Natural killer cell (primary cell): ENCODE measurements at regions of chr17 and their contacts with region 1.

Region 1: GRCh38 chr17:43576563-43577229 is 30.6 kb upstream of the ETV4 start:
- DNase-seq: peak; percentile 56 to 89
- ATAC-seq: peak; percentile 61 to 89 (median 77)
- H3K4me3 ChIP-seq: no peak overlapping the region
- H3K4me3 Mint-ChIP-seq: no peak overlapping the region
- H3K27ac ChIP-seq: no peak overlapping the region
- H3K27ac Mint-ChIP-seq: no peak overlapping the region
- H3K4me1 ChIP-seq: peaks cover 19% of the 10 kb centered on the region
- H3K4me1 Mint-ChIP-seq: no peaks in the 10 kb centered on the region
- H3K27me3 ChIP-seq: no peaks in the 10 kb centered on the region
- H3K27me3 Mint-ChIP-seq: peaks cover 9 to 13% of the 10 kb centered on the region in 2 donors
- CTCF ChIP-seq: peak; percentile 86

Region 2: DNA sequence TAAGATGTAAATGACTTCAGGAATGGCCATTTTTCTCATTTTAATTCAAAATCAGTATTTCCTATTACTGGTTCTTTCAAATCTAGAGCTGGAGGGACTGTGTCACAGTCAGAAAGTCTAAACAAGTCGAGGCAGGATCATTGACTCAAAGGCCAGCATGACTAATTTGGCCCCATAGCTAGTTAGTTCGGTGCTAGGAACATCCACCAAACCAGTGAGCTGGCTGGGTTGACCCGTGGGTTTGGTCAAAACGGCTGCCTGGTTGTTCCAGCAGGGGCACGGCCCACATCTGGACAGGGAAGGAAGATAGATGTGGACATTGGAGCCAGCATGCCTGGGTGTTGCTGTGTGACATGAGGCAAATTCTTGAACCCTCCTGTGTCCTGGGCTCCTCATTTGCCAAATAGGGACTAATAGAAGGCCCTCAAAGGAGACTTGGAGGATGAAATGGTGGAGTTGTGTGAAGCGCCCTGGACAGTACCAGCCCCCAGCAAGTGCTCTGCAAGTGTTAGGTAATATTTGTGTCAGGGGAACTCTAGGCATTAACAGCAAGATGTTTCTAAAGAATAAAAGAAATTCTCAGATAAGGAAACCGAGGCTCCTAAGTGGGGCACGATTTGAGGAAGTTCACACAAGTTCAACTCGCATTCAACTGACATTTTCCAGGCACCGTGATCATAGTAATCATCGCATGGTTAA is 38.8 kb after region 1 on chr17:
- intact Hi-C with region 1: no loop called
- DNase-seq: no peak
- ATAC-seq: no peak
- H3K4me3 ChIP-seq: no peak overlapping the region
- H3K4me3 Mint-ChIP-seq: no peak overlapping the region
- H3K27ac ChIP-seq: no peak overlapping the region
- H3K27ac Mint-ChIP-seq: no peak overlapping the region
- H3K4me1 ChIP-seq: no peaks in the 10 kb centered on the region
- H3K4me1 Mint-ChIP-seq: no peaks in the 10 kb centered on the region
- H3K27me3 ChIP-seq: no peaks in the 10 kb centered on the region
- H3K27me3 Mint-ChIP-seq: peaks cover 8 to 12% of the 10 kb centered on the region in 2 donors
- CTCF ChIP-seq: no peak

Region 3: DNA sequence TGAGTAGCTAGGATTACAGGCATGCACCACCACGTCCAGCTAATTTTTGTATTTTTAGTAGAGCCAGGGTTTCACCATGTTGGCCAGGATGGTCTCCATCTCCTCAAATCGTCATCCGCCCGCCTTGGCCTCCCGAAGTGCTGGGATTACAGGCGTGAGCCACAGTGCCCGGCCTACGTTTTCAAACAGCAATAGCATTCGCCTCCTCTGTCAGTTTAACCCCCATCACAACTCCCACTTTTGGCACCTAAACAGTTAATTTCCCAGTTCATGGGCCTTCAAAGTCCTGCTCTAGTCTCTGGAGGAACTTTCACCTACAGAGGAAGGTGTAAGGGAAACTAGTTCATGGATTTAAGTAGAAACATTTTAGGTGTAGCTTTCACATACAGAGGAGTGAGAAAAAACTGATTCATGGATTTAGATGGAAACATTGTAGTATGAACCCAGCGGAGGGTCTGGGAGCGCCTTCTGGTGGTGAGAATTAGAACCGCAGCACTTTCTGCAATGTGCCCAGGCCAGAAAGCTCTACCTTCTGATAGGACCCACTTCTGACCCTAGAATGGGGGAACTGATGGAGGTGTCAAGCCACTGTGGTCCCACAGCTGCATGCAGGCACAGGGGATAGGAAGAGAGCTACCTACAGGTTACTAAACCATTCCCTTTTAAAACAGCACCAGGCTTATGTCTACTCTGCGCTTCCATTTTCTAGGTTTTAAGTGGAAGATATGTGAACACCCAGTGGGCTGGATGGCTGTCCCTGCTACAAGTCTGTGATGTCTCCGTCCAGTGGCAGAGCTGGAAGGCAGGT is 97.0 kb after region 1 on chr17:
- intact Hi-C with region 1: loop called (anchors 1 kb)
- DNase-seq: peak; percentile 61 to 83
- ATAC-seq: peak; percentile 64 to 77 (median 67)
- H3K4me3 ChIP-seq: no peak overlapping the region
- H3K4me3 Mint-ChIP-seq: no peak overlapping the region
- H3K27ac ChIP-seq: no peak overlapping the region
- H3K27ac Mint-ChIP-seq: no peak overlapping the region
- H3K4me1 ChIP-seq: peaks cover 7% of the 10 kb centered on the region
- H3K4me1 Mint-ChIP-seq: peaks cover 6 to 11% of the 10 kb centered on the region in 2 donors
- H3K27me3 ChIP-seq: no peaks in the 10 kb centered on the region
- H3K27me3 Mint-ChIP-seq: peaks cover 5 to 15% of the 10 kb centered on the region in 2 donors
- CTCF ChIP-seq: peak; percentile 83

Region 4: DNA sequence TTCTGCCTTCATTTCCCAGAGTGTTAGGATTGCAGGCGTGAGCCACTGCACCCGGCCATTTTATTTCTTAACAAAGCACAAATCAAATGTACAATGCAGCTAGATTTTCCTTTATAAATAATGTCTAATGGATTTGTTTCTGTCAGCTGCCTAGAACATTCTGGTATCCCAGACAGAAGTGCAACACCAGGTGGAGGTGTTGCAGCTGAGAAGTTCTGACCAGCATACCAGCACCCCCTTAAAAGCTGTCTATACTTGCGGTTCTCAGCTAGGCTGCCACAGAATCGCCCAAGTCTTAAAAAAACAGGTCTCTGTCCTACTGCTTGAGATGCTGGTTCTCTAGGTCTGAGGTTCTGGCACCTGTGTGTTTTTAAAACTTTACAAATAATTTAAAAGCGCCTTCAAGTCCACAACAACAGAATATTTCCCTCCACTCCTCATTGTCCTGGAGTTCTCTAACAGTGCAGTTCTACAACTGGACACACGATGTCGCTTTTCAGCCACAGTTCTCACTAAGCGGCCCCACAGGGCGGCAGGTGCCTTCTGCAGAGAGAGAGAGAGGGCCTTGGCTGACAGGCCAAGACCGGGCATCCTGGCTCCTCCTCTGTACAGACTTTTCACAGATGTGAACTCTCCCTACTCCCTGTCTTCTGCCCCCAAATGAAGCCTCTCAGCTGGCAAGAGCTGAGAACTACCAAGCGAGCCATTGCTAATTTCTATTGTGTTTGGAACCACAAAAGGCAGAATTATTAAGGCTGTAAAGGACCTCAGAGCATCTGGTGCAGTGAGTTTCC is 117.6 kb after region 1 on chr17:
- intact Hi-C with region 1: loop called (anchors 1 kb)
- DNase-seq: peak; percentile 61 to 89
- ATAC-seq: peak; percentile 82 to 100 (median 99)
- H3K4me3 ChIP-seq: no peak overlapping the region
- H3K4me3 Mint-ChIP-seq: no peak overlapping the region
- H3K27ac ChIP-seq: no peak overlapping the region
- H3K27ac Mint-ChIP-seq: no peak overlapping the region
- H3K4me1 ChIP-seq: peaks cover 5% of the 10 kb centered on the region
- H3K4me1 Mint-ChIP-seq: peaks cover 5 to 6% of the 10 kb centered on the region in 2 donors
- H3K27me3 ChIP-seq: peaks cover 10% of the 10 kb centered on the region
- H3K27me3 Mint-ChIP-seq: peaks cover 34 to 36% of the 10 kb centered on the region in 2 donors
- CTCF ChIP-seq: peak; percentile 92

Region 5: DNA sequence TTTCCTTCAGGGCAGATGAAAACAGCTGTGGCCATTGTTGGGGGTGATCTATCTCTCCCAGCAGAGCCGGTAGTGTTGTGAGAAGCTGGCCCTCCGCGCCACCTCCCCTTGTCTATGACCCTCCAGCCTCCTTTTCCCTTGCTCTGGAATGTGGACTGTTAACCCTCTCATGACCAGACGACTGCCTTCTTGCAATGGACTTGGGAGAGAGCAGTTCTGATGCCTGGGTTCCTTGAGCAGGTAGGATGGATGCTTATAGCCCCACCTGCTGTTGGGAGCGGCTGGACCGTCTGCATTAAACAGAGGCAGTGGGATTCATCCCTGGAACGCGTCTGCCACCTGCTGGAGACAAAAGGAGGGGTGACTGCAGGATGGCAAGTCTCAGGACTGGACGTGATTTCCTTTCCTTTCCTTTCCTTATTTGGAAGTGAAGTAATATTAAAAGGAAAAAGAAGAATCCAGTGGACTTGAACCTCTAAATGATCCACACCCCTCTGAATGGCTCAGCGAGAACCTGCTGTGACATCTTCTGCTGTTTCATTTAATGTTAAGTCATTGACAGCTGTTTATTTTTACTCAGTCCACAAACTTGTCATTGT is 183.7 kb after region 1 on chr17:
- intact Hi-C with region 1: loop called (anchors 1 kb)
- DNase-seq: peak; percentile 85 to 93
- ATAC-seq: peak; percentile 92 to 98 (median 98)
- H3K4me3 ChIP-seq: no peak overlapping the region
- H3K4me3 Mint-ChIP-seq: no peak overlapping the region
- H3K27ac ChIP-seq: no peak overlapping the region
- H3K27ac Mint-ChIP-seq: no peak overlapping the region
- H3K4me1 ChIP-seq: peaks cover 34% of the 10 kb centered on the region
- H3K4me1 Mint-ChIP-seq: peaks cover 5 to 17% of the 10 kb centered on the region in 2 donors
- H3K27me3 ChIP-seq: peaks cover 31% of the 10 kb centered on the region
- H3K27me3 Mint-ChIP-seq: peaks cover 32 to 37% of the 10 kb centered on the region in 2 donors
- CTCF ChIP-seq: peak; percentile 98